ENCODE measurements at regions of chr16 and their contacts with region 1.

Region 1: GRCh38 chr16:1413684-1414531 is 596 bp downstream of the UNKL start:
- DNase-seq: no peak
- H3K4me3 ChIP-seq: peak overlapping the region; percentile 96 to 99
- H3K27ac ChIP-seq: peak overlapping the region; percentile 87
- H3K4me1 ChIP-seq: peaks cover 43% of the 10 kb centered on the region
- H3K27me3 ChIP-seq: no peaks in the 10 kb centered on the region
- CTCF ChIP-seq: peak in 2 of 3 experiments; percentile 23 to 29
- POLR2A ChIP-seq: no peak

Region 2: GRCh38 chr16:1363501-1364041 is 50.3 kb before region 1 on chr16:
- intact Hi-C with region 1: loop called (anchors 10 kb)
- DNase-seq: no peak
- H3K4me3 ChIP-seq: no peak overlapping the region
- H3K27ac ChIP-seq: no peak overlapping the region
- H3K4me1 ChIP-seq: no peaks in the 10 kb centered on the region
- H3K27me3 ChIP-seq: no peaks in the 10 kb centered on the region
- CTCF ChIP-seq: peak in 2 of 3 experiments; percentile 31 to 50
- POLR2A ChIP-seq: no peak

Region 3: DNA sequence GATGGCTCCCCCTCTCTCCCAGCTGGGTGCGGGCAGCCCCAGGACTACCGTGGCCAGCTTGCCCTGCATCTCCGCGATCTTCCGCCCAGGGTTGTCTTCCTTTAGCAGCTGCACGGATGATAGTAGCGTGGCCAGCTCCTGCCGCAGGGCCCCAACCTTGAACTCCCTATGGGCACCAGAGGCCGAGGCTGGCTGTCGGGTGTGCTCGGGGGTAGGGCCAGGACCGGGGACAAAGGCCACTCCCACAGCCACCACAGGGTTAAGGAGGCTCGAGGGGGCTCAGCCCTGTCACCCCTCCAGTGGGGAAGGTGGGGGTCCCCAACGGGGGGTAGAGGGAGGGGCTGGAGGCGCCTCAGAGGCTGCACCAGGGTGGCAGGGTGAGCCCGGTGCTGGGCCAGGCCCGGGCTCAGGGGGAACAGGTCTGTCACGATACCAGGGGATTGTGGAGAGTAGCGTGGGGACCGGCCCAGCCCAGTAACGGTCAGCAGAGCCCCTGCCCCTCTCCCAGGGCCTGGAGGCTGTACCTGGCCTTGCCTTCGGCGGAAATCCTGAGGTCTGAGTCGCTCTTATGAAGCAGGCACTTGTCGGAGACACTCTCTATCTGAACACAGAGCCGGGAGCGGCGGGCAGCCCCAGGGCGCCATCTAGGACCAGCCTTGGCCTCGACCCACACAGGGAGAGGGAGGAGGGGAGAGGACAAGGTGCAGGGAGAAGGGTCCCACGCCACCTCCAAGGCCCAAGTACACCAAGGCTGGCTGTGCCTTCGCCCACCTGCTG is 22.2 kb after region 1 on chr16:
- intact Hi-C with region 1: no loop called
- DNase-seq: no peak
- H3K4me3 ChIP-seq: no peak overlapping the region
- H3K27ac ChIP-seq: no peak overlapping the region
- H3K4me1 ChIP-seq: no peaks in the 10 kb centered on the region
- H3K27me3 ChIP-seq: no peaks in the 10 kb centered on the region
- CTCF ChIP-seq: no peak
- POLR2A ChIP-seq: no peak

Measured in vagina (tissue), 2 donors.